ENCODE measurements at regions of chr10 and their contacts with region 1.

Region 1: GRCh38 chr10:70093335-70093944 is 39.2 kb downstream of the AIFM2 start:
- DNase-seq: peak in 7 of 9 donors; percentile 28 to 52 (median 42)
- ATAC-seq: peak; percentile 75
- H3K4me3 ChIP-seq: peak overlapping the region; percentile 73
- H3K4me3 Mint-ChIP-seq: peak overlapping the region; percentile 70 to 96 (median 89)
- H3K27ac ChIP-seq: peak overlapping the region; percentile 79
- H3K27ac Mint-ChIP-seq: peak overlapping the region; percentile 77 to 99 (median 93)
- H3K4me1 ChIP-seq: peaks cover 17 to 29% of the 10 kb centered on the region in 2 donors
- H3K4me1 Mint-ChIP-seq: peaks cover 18 to 64% (median 57%) of the 10 kb centered on the region in 7 donors
- H3K27me3 ChIP-seq: no peaks in the 10 kb centered on the region
- H3K27me3 Mint-ChIP-seq: no peaks in the 10 kb centered on the region

Region 2: DNA sequence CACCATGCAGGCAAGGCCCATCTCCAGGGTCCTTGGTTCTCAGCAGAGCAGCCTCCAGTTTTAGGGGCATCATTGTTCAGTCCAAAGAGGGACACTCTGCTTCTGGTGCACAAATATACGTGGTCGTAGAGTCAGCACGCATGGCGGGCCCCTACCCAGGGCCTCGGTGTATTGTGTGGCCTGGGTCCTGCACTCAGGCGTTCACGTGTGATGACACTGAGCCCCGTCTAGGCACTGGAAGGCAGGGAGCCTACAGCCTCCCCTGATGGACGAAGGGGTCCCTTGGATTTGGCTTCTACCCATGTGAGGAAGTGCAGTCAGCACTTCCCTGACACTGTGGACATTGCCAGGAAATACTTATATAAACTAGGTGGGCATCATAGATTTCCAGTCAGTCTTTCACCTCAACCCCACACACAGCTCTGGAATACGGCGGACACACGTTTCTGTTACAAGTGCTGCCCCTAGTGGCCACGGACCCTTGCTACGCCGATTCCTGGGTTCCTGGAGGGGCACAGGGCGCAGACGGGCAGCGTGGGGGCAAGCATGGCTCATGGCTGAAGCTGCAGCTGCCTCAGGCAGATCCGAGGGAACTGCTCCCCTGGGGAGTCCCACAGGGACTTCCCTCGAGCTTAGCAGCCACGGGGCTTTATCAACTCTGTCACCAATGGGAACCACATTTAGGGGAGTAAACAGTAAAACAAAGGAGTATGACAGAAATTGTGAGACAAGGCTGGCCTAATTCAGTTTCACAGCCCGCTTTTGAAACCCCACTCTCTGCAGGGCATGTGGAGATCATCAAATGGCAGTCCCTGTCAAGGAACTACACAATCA is 13.7 kb after region 1 on chr10:
- CTCF ChIA-PET with region 1: interaction called, 3 read pairs
- POLR2A ChIA-PET with region 1: interaction called, 5 read pairs
- intact Hi-C with region 1: loop called in 1 of 2 experiments (anchors 1 kb)
- DNase-seq: no peak
- ATAC-seq: no peak
- H3K4me3 ChIP-seq: no peak overlapping the region
- H3K4me3 Mint-ChIP-seq: no peak overlapping the region
- H3K27ac ChIP-seq: no peak overlapping the region
- H3K27ac Mint-ChIP-seq: peak overlapping the region in 2 of 9 donors; percentile 2 to 15
- H3K4me1 ChIP-seq: no peaks in the 10 kb centered on the region
- H3K4me1 Mint-ChIP-seq: peaks cover 0 to 9% (median 0%) of the 10 kb centered on the region in 7 donors
- H3K27me3 ChIP-seq: no peaks in the 10 kb centered on the region
- H3K27me3 Mint-ChIP-seq: no peaks in the 10 kb centered on the region

Region 3: DNA sequence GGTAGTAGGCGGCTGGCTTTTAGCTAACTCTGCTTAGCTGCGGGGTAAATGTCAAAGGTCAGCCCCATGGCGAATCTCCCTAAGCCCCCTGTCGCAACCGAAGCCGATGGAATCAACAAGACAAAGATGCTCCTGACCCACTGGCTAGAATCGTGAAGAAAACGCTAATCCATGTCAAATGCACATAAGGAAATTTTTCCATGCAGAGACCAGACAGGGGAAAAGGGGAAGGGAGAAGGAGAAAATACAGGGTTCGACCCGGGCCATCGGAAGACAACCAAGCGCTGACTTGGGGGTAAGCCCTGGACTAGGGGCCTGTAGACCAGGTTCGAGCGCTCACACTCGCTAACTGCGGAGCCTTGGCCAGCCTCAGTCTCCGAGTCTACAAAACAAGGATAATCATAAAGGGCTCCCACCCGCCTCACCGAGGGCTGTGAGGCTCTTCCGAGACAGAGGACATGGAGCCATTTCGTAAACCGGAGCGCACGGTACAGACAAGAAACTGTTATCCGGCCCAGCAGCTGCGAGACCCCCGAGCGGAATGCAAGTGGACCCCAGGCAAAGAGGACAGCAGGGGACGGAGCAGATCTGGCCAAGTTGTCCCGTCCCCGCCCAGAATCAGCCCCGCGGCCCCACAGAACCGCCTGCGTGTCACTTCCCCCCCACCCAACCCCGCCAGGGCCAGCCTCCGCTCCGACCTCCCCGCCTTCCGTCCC is 76.4 kb after region 1 on chr10:
- CTCF ChIA-PET with region 1: interaction called, 3 read pairs
- POLR2A ChIA-PET with region 1: interaction called, 14 read pairs
- intact Hi-C with region 1: loop called in 1 of 2 experiments (anchors 1 kb)
- DNase-seq: peak in 2 of 9 donors; percentile 8 to 30
- ATAC-seq: peak; percentile 18
- H3K4me3 ChIP-seq: peak overlapping the region; percentile 88
- H3K4me3 Mint-ChIP-seq: peak overlapping the region; percentile 86 to 97 (median 94)
- H3K27ac ChIP-seq: peak overlapping the region; percentile 95
- H3K27ac Mint-ChIP-seq: peak overlapping the region; percentile 83 to 98 (median 96)
- H3K4me1 ChIP-seq: peaks cover 47 to 49% of the 10 kb centered on the region in 2 donors
- H3K4me1 Mint-ChIP-seq: peaks cover 46 to 70% (median 65%) of the 10 kb centered on the region in 7 donors
- H3K27me3 ChIP-seq: no peaks in the 10 kb centered on the region
- H3K27me3 Mint-ChIP-seq: no peaks in the 10 kb centered on the region

Region 4: GRCh38 chr10:70283445-70284399 is 190.3 kb after region 1 on chr10 and contains the start of gene NPFFR1:
- CTCF ChIA-PET with region 1: no interaction called
- POLR2A ChIA-PET with region 1: no interaction called
- intact Hi-C with region 1: no loop called
- DNase-seq: no peak
- ATAC-seq: no peak
- H3K4me3 ChIP-seq: no peak within 1 kb of the TSS
- H3K4me3 Mint-ChIP-seq: peak within 1 kb of the TSS in 2 of 10 donors; percentile 12 to 16
- H3K27ac ChIP-seq: no peak within 1 kb of the TSS
- H3K27ac Mint-ChIP-seq: no peak within 1 kb of the TSS
- H3K4me1 ChIP-seq: no peaks in the 10 kb centered on the region
- H3K4me1 Mint-ChIP-seq: peaks cover 0 to 2% (median 0%) of the 10 kb centered on the region in 7 donors
- H3K27me3 ChIP-seq: peaks cover 0 to 17% of the 10 kb centered on the region in 2 donors
- H3K27me3 Mint-ChIP-seq: peaks cover 54 to 71% (median 56%) of the 10 kb centered on the region in 5 donors
- total RNA-seq, gene NPFFR1: 0.05 TPM in 1 of 5 experiments, not detected in the others

Region 5: DNA sequence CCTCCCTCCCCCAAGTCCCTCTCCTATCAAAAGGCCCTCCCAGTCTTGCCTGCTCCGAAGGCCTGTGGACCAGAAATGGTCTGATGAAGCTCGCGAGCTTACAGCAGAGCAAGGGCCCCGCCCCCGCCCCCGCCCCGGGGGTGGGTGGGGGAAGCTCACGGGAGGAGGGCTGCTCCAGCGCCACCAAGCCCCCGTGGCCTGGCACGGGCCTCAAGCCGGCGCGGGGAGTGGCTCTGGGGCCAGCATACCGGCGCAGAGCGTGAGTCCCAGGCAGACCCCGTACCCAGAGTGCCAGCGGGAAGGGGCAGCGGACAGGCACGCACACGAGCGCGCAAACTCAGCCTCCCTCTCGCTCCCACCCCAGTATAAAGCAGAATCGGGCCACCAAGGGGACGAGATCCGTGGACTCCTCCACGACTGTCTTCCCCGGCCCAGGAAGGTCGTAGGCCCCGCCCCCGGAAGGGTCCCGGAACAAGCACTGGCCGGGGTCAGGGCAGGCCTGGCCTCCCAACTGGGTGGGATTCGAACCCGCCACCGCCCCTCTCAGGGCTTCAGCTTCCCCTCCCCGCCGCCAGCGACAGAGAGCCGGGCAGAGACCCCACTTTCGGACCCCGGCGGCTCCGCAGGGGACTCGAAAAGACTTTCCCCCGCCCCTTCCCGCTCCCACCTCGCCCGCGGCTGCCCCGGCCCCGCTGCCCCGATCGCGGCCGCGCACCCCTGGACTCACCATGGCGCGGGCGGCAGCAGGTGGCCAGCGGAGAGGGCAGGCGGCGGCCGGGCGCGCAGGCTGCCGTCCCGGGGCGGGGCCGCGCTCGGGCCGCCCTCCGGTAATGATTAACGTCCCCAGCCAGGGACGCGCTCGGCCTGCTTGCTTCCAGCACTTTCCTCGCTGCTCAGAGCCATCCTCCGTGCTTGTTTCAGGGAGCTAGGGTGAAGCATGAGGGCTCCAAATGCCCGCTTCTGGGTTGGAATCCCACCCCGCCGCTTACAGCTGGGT is 794.7 kb after region 1 on chr10 and contains the start of gene PCBD1:
- CTCF ChIA-PET with region 1: no interaction called
- POLR2A ChIA-PET with region 1: no interaction called
- intact Hi-C with region 1: loop called in 1 of 2 experiments (anchors 5 kb)
- DNase-seq: peak; percentile 36 to 78 (median 63)
- ATAC-seq: peak; percentile 93
- H3K4me3 ChIP-seq: peak within 1 kb of the TSS; percentile 73
- H3K4me3 Mint-ChIP-seq: peak within 1 kb of the TSS; percentile 84 to 89 (median 88)
- H3K27ac ChIP-seq: peak within 1 kb of the TSS; percentile 74
- H3K27ac Mint-ChIP-seq: peak within 1 kb of the TSS; percentile 53 to 91 (median 78)
- H3K4me1 ChIP-seq: peaks cover 4 to 10% of the 10 kb centered on the region in 2 donors
- H3K4me1 Mint-ChIP-seq: peaks cover 0 to 25% (median 8%) of the 10 kb centered on the region in 7 donors
- H3K27me3 ChIP-seq: no peaks in the 10 kb centered on the region
- H3K27me3 Mint-ChIP-seq: no peaks in the 10 kb centered on the region
- total RNA-seq, gene PCBD1: 4.5 to 29.8 (median 8.3) TPM

Measured in naive thymus-derived CD4-positive, alpha-beta T cell (primary cell).